Activated CD4-positive, alpha-beta T cell treated with anti-CD3 and anti-CD28 coated beads, Interleukin-2, amount 10 ng/mL, durations not matched to agents 24 days and 14 days (primary cell): ENCODE measurements at regions of chr20 and their contacts with region 1.

Region 1: GRCh38 chr20:9912858-9913434 is 74.1 kb upstream of the PAK5 start:
- DNase-seq: peak; percentile 76
- H3K4me3 Mint-ChIP-seq: no peak overlapping the region
- H3K27ac Mint-ChIP-seq: no peak overlapping the region
- H3K4me1 Mint-ChIP-seq: no peaks in the 10 kb centered on the region
- H3K27me3 Mint-ChIP-seq: no peaks in the 10 kb centered on the region

Region 2: DNA sequence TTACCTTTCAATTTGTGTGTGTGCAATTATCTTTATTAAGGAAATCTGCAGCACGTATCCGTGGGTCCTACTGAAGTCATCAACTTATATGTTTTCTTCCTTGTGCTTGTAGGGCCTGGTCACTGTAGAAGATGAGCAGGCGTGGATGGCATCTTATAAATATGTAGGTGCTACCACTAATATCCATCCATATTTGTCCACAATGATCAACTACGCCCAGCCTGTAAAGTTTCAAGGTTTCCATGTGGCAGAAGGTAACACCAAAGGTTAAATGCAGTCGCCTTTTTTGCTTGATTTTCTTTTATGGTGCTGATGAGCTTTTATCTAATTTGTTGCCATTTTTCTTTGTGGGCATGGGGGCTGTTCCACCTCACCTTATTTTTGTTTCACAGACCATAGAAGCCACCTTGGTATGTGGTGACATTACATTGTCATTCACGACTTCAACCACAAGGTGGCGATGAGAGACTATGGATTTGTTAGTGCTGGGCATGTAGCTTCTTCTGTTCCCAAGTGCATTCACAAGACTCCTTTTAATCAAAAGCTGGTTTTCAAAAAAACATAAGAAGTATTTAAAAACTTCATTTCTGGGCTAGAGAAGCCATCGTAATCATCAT is 505.0 kb before region 1 on chr20:
- intact Hi-C with region 1: loop called (anchors 10 kb)
- DNase-seq: peak; percentile 85
- H3K4me3 Mint-ChIP-seq: no peak overlapping the region
- H3K27ac Mint-ChIP-seq: no peak overlapping the region
- H3K4me1 Mint-ChIP-seq: no peaks in the 10 kb centered on the region
- H3K27me3 Mint-ChIP-seq: no peaks in the 10 kb centered on the region

Region 3: GRCh38 chr20:9616833-9617489 is 296.0 kb before region 1 on chr20:
- intact Hi-C with region 1: loop called (anchors 1 kb)
- DNase-seq: peak; percentile 82
- H3K4me3 Mint-ChIP-seq: no peak overlapping the region
- H3K27ac Mint-ChIP-seq: no peak overlapping the region
- H3K4me1 Mint-ChIP-seq: no peaks in the 10 kb centered on the region
- H3K27me3 Mint-ChIP-seq: no peaks in the 10 kb centered on the region

Region 4: DNA sequence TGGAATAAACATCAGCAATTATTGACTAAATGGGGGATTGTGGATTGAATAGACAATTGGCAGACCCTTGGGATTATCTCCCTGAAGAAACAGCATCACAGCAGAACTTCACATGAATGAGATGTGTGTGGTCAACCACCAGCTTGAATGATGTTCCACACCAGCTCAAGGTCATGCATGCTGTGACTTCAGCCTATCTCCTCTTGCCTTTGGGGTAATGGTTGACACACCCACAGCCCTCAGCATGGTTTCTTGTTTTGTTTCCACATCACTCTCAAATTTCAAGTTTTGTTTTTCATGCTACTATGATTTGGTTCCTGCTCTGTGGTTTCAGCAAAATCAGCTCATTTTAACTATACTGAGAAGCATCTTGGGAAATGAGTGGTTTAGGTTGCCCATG is 168.4 kb before region 1 on chr20:
- intact Hi-C with region 1: no loop called
- DNase-seq: no peak
- H3K4me3 Mint-ChIP-seq: no peak overlapping the region
- H3K27ac Mint-ChIP-seq: no peak overlapping the region
- H3K4me1 Mint-ChIP-seq: no peaks in the 10 kb centered on the region
- H3K27me3 Mint-ChIP-seq: no peaks in the 10 kb centered on the region

Region 5: DNA sequence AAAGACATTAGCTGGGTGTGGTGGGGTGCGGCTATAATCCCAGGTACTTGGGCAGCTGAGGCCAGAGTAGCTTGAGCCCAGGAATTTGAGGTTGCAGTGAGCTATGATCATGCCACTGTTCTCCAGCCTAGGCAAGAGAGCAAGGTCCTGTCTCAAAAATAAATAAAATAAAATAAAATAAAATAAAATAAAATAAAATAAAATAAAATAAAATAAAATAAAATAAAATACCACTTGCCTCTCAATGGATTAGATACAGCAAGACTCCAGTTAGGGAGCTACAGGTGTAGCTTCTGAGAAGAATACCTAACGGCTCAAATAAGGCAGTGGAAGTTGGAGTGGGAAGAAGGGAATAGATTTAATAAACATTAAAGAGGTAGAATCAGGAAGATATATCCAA is 60.4 kb before region 1 on chr20:
- intact Hi-C with region 1: no loop called
- DNase-seq: peak; percentile 8
- H3K4me3 Mint-ChIP-seq: no peak overlapping the region
- H3K27ac Mint-ChIP-seq: no peak overlapping the region
- H3K4me1 Mint-ChIP-seq: no peaks in the 10 kb centered on the region
- H3K27me3 Mint-ChIP-seq: no peaks in the 10 kb centered on the region